CD4-positive, alpha-beta T cell (primary cell): ENCODE measurements at regions of chr15 and their contacts with region 1.

Region 1: DNA sequence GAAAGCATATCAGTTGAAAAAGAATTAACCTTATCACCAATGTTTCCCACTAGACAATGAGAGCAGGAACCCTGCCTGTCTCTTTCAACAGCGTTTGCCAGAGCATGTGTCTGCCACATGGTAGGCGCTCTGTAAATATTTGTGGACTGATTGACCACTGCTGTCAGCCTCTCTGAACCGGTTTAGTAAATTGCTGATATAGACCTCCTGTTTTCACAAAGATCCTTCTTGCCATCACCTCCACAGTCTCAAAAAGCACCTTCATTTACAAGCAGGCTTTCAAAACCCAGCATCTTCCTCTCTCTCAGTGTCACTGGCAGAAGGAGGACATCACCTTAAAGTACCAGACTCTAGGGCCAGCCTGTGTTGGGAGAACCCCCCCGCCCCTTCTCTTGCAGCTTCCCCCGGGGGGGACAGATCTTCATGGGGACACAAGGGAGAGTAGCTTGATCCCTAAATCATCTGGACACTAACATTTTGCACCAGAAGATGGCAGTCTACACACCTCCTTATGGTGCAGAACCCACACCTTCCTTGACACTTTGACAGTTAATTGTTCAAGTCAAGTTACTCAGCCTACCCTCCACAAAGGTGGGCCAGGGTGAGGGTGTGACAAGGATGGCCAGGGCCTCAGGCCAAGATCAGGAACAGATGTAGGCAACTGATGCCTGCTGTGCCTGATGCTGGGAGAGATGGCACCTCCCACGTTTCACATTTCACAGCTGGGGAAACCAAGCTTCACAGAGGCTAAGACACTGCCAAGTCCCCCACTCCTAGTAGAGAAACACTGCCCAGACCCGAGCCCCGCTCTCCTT is 37.8 kb upstream of the USP3 start:
- DNase-seq: peak in 12 of 14 experiments; percentile 20 to 89 (median 42)
- ATAC-seq: peak; percentile 81
- H3K4me3 ChIP-seq: no peak overlapping the region
- H3K4me3 Mint-ChIP-seq: no peak overlapping the region
- H3K27ac ChIP-seq: no peak overlapping the region
- H3K27ac Mint-ChIP-seq: peak overlapping the region; percentile 19
- H3K4me1 ChIP-seq: peaks cover 15% of the 10 kb centered on the region
- H3K4me1 Mint-ChIP-seq: peaks cover 39% of the 10 kb centered on the region
- H3K27me3 ChIP-seq: no peaks in the 10 kb centered on the region
- H3K27me3 Mint-ChIP-seq: no peaks in the 10 kb centered on the region
- CTCF ChIP-seq: peak; percentile 79

Region 2: GRCh38 chr15:63434576-63435186 is 31.9 kb before region 1 on chr15:
- CTCF ChIA-PET with region 1: no interaction called
- POLR2A ChIA-PET with region 1: no interaction called
- intact Hi-C with region 1: no loop called
- DNase-seq: no peak
- ATAC-seq: no peak
- H3K4me3 ChIP-seq: no peak overlapping the region
- H3K4me3 Mint-ChIP-seq: no peak overlapping the region
- H3K27ac ChIP-seq: no peak overlapping the region
- H3K27ac Mint-ChIP-seq: no peak overlapping the region
- H3K4me1 ChIP-seq: peaks cover 22% of the 10 kb centered on the region
- H3K4me1 Mint-ChIP-seq: peaks cover 32% of the 10 kb centered on the region
- H3K27me3 ChIP-seq: no peaks in the 10 kb centered on the region
- H3K27me3 Mint-ChIP-seq: peaks cover 3% of the 10 kb centered on the region
- CTCF ChIP-seq: no peak

Region 3: GRCh38 chr15:63481105-63481810 is 14.7 kb after region 1 on chr15:
- CTCF ChIA-PET with region 1: interaction called, 38 read pairs
- POLR2A ChIA-PET with region 1: interaction called, 16 read pairs
- intact Hi-C with region 1: loop called in 1 of 2 experiments (anchors 1 kb)
- DNase-seq: peak in 2 of 14 experiments; percentile 61 to 69
- ATAC-seq: no peak
- H3K4me3 ChIP-seq: no peak overlapping the region
- H3K4me3 Mint-ChIP-seq: peak overlapping the region; percentile 26
- H3K27ac ChIP-seq: peak overlapping the region; percentile 71 to 91
- H3K27ac Mint-ChIP-seq: peak overlapping the region; percentile 95
- H3K4me1 ChIP-seq: peaks cover 89% of the 10 kb centered on the region
- H3K4me1 Mint-ChIP-seq: peaks cover 81% of the 10 kb centered on the region
- H3K27me3 ChIP-seq: no peaks in the 10 kb centered on the region
- H3K27me3 Mint-ChIP-seq: no peaks in the 10 kb centered on the region
- CTCF ChIP-seq: no peak

Region 4: GRCh38 chr15:63504247-63504978 is 37.8 kb after region 1 on chr15 and contains the start of gene USP3:
- CTCF ChIA-PET with region 1: interaction called, 48 read pairs
- POLR2A ChIA-PET with region 1: interaction called, 79 read pairs
- intact Hi-C with region 1: loop called (anchors 1 kb)
- DNase-seq: peak; percentile 88 to 96 (median 93)
- ATAC-seq: peak; percentile 67
- H3K4me3 ChIP-seq: peak within 1 kb of the TSS; percentile 93
- H3K4me3 Mint-ChIP-seq: peak within 1 kb of the TSS; percentile 96
- H3K27ac ChIP-seq: peak within 1 kb of the TSS; percentile 97 to 99
- H3K27ac Mint-ChIP-seq: peak within 1 kb of the TSS; percentile 92
- H3K4me1 ChIP-seq: peaks cover 58% of the 10 kb centered on the region
- H3K4me1 Mint-ChIP-seq: peaks cover 77% of the 10 kb centered on the region
- H3K27me3 ChIP-seq: no peaks in the 10 kb centered on the region
- H3K27me3 Mint-ChIP-seq: no peaks in the 10 kb centered on the region
- CTCF ChIP-seq: peak; percentile 36
- total RNA-seq, gene USP3: 280 to 282 TPM

Region 5: GRCh38 chr15:63539521-63539920 is 72.9 kb after region 1 on chr15:
- CTCF ChIA-PET with region 1: interaction called, 15 read pairs
- POLR2A ChIA-PET with region 1: interaction called, 5 read pairs
- intact Hi-C with region 1: loop called in 1 of 2 experiments (anchors 2 kb)
- DNase-seq: peak in 3 of 14 experiments; percentile 28 to 30 (median 30)
- ATAC-seq: no peak
- H3K4me3 ChIP-seq: no peak overlapping the region
- H3K4me3 Mint-ChIP-seq: no peak overlapping the region
- H3K27ac ChIP-seq: no peak overlapping the region
- H3K27ac Mint-ChIP-seq: no peak overlapping the region
- H3K4me1 ChIP-seq: peaks cover 7% of the 10 kb centered on the region
- H3K4me1 Mint-ChIP-seq: peaks cover 69% of the 10 kb centered on the region
- H3K27me3 ChIP-seq: no peaks in the 10 kb centered on the region
- H3K27me3 Mint-ChIP-seq: no peaks in the 10 kb centered on the region
- CTCF ChIP-seq: no peak

Region 6: DNA sequence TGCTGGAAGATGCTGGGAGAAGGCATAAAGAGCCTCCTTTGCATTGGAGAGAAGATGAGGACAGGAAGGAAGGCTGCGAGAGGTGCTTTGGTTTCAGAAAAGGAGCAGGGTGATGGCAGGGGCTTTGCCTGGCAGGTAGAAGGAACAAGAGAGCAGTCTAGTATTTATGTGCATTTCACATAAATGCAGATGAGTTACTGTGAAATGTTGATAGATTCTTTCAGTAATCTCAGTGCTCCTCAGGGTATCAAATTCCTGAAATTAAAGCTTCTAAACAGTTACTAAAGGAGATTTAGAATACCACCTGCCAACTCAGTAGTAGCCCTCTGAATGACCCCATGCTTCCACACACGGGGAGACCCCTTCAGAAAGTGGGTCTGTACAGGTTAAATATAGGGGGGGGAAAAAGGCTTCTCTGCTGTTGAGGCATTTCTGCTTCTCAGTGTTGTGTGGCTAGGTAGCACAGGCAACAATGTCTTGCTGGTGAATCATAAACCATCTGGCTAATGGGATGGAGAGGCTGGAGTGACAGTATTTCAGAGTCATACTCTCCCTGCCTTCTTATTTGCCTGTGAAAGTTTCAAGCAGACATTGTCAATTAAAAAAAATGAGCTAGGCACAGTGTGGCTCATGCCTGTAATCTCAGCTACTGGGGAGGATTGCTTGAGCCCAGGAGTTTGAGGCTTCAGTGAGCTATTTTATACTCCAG is 116.3 kb after region 1 on chr15:
- CTCF ChIA-PET with region 1: interaction called, 7 read pairs
- POLR2A ChIA-PET with region 1: interaction called, 3 read pairs
- intact Hi-C with region 1: loop called in 1 of 2 experiments (anchors 5 kb)
- DNase-seq: no peak
- ATAC-seq: peak; percentile 24
- H3K4me3 ChIP-seq: no peak overlapping the region
- H3K4me3 Mint-ChIP-seq: no peak overlapping the region
- H3K27ac ChIP-seq: no peak overlapping the region
- H3K27ac Mint-ChIP-seq: peak overlapping the region; percentile 32
- H3K4me1 ChIP-seq: no peaks in the 10 kb centered on the region
- H3K4me1 Mint-ChIP-seq: peaks cover 25% of the 10 kb centered on the region
- H3K27me3 ChIP-seq: no peaks in the 10 kb centered on the region
- H3K27me3 Mint-ChIP-seq: no peaks in the 10 kb centered on the region
- CTCF ChIP-seq: no peak

Region 7: GRCh38 chr15:63803106-63803886 is 336.7 kb after region 1 on chr15:
- CTCF ChIA-PET with region 1: no interaction called
- POLR2A ChIA-PET with region 1: no interaction called
- intact Hi-C with region 1: no loop called
- DNase-seq: no peak
- ATAC-seq: no peak
- H3K4me3 ChIP-seq: no peak overlapping the region
- H3K4me3 Mint-ChIP-seq: no peak overlapping the region
- H3K27ac ChIP-seq: no peak overlapping the region
- H3K27ac Mint-ChIP-seq: no peak overlapping the region
- H3K4me1 ChIP-seq: peaks cover 35% of the 10 kb centered on the region
- H3K4me1 Mint-ChIP-seq: peaks cover 92% of the 10 kb centered on the region
- H3K27me3 ChIP-seq: no peaks in the 10 kb centered on the region
- H3K27me3 Mint-ChIP-seq: no peaks in the 10 kb centered on the region
- CTCF ChIP-seq: no peak